ENCODE measurements at regions of chr2 and their contacts with region 1.

Region 1: DNA sequence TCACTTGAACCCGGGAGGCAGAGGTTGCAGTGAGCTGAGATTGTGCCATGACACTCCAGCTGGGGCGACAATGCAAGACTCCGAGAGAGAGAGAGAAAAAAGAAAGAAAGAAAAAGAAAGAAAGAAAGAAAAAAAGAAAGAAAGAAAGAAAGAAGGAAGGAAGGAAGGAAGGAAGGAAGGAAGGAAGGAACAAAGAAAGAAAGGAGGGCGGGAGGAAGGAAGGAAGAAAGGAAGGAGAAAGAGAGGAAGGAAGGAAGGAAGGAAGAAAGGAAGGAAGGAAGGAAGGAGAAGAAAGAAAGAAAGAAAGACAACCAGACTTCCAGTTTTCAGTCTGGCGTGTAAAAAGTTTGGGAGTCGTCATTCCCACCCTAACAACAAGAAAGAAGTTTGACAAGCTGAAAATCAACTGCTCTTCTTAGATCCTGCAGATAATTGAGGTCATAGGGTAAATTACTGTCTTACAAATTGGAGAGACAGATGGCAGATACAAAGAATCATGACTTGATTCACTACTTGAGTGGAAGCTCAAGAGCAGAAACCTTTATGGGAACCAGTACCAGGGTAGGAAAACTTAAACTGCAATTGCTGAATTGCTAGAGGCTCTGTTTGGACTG is 15.1 kb upstream of the CYP27C1 start:
- DNase-seq: no peak
- H3K4me3 ChIP-seq: no peak overlapping the region
- H3K27ac ChIP-seq: no peak overlapping the region
- H3K4me1 ChIP-seq: no peaks in the 10 kb centered on the region
- H3K27me3 ChIP-seq: no peaks in the 10 kb centered on the region
- CTCF ChIP-seq: no peak

Region 2: GRCh38 chr2:127288274-127288673 is 53.1 kb after region 1 on chr2:
- CTCF ChIA-PET with region 1: no interaction called
- dilution Hi-C with region 1: loop called (anchors 5 kb)
- in situ Hi-C with region 1: no loop called
- intact Hi-C with region 1: no loop called
- DNase-seq: no peak
- H3K4me3 ChIP-seq: no peak overlapping the region
- H3K27ac ChIP-seq: no peak overlapping the region
- H3K4me1 ChIP-seq: no peaks in the 10 kb centered on the region
- H3K27me3 ChIP-seq: no peaks in the 10 kb centered on the region
- CTCF ChIP-seq: no peak